ENCODE measurements at regions of chr10 and their contacts with region 1.

Region 1: DNA sequence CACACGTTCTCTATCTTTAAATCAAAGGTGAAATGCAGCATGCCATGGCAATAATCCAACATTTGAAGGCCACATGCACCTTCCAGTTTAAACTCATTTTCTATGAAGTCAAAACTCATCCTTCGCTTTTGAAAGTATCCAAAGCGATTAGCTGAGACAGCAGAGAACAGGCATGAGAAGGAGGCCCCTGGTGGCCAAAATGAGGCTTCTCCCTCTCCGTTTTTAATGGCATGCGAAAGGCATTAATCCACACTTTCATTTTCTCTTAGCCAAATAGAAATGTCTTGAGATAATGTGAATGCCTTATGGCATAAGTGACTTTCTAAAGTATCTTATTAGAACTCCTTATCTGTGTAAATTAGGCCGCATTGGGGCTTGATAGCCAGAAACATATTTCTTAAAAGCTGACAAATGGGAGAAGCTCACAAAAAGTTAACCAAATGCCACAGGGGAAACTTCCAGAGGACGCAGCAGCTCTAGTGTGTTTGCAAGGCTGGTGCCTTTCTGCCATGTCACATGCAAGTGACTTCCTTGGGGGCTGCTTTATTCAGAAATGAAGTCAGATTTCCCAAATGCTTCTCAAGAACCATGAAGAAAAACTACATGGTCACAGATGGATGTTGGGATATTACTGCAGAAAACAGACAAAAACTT is 1189.6 kb downstream of the SORCS1 start:
- DNase-seq: no peak
- ATAC-seq: peak; percentile 91
- H3K4me3 ChIP-seq: no peak overlapping the region
- H3K27ac ChIP-seq: no peak overlapping the region
- H3K4me1 ChIP-seq: no peaks in the 10 kb centered on the region
- H3K27me3 ChIP-seq: no peaks in the 10 kb centered on the region
- CTCF ChIP-seq: peak; percentile 45 to 55 (median 47); a peak in 5 of 6 replicates
- EP300 ChIP-seq: no peak
- POLR2A ChIP-seq: no peak
- RAD21 ChIP-seq: peak; percentile 26; the same call in 1 of the 2 replicates

Region 2: DNA sequence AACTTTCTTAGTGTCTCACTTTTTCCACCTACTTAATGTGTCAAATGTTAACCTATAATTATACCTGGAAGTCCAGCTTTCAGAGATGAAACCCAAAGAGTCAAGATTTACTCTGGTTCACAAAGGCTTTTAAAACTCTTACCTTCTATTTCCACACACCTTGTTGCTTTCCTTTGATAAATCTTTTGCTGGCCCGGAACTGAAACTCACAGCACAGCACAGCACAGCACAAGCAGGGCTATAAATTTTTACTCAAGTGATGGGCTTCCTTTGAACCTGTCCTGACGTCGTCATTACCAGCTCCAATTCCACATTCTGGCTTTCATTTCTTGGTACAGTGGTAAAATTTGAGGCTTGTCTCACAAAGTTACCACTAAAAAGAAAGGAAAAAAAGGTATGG is 472.9 kb before region 1 on chr10:
- CTCF ChIA-PET with region 1: no interaction called
- POLR2A ChIA-PET with region 1: no interaction called
- RAD21 ChIA-PET with region 1: no interaction called
- SMC1A ChIA-PET with region 1: no interaction called
- in situ Hi-C with region 1: no loop called
- intact Hi-C with region 1: no loop called
- DNase-seq: no peak
- ATAC-seq: no peak
- H3K4me3 ChIP-seq: no peak overlapping the region
- H3K27ac ChIP-seq: no peak overlapping the region
- H3K4me1 ChIP-seq: no peaks in the 10 kb centered on the region
- H3K27me3 ChIP-seq: no peaks in the 10 kb centered on the region
- CTCF ChIP-seq: no peak
- EP300 ChIP-seq: no peak
- POLR2A ChIP-seq: no peak
- RAD21 ChIP-seq: no peak

Region 3: GRCh38 chr10:105963334-105963884 is 11.5 kb before region 1 on chr10:
- CTCF ChIA-PET with region 1: interaction called, 10 read pairs
- POLR2A ChIA-PET with region 1: no interaction called
- RAD21 ChIA-PET with region 1: interaction called, 8 read pairs
- SMC1A ChIA-PET with region 1: interaction called, 7 read pairs
- in situ Hi-C with region 1: no loop called
- intact Hi-C with region 1: no loop called
- DNase-seq: no peak
- ATAC-seq: no peak
- H3K4me3 ChIP-seq: no peak overlapping the region
- H3K27ac ChIP-seq: no peak overlapping the region
- H3K4me1 ChIP-seq: no peaks in the 10 kb centered on the region
- H3K27me3 ChIP-seq: no peaks in the 10 kb centered on the region
- CTCF ChIP-seq: no peak
- EP300 ChIP-seq: no peak
- POLR2A ChIP-seq: no peak
- RAD21 ChIP-seq: no peak

Region 4: GRCh38 chr10:105986912-105987635 is 12.1 kb after region 1 on chr10:
- CTCF ChIA-PET with region 1: interaction called, 10 read pairs
- POLR2A ChIA-PET with region 1: no interaction called
- RAD21 ChIA-PET with region 1: no interaction called
- SMC1A ChIA-PET with region 1: interaction called, 6 read pairs
- in situ Hi-C with region 1: no loop called
- intact Hi-C with region 1: no loop called
- DNase-seq: no peak
- ATAC-seq: no peak
- H3K4me3 ChIP-seq: no peak overlapping the region
- H3K27ac ChIP-seq: no peak overlapping the region
- H3K4me1 ChIP-seq: no peaks in the 10 kb centered on the region
- H3K27me3 ChIP-seq: no peaks in the 10 kb centered on the region
- CTCF ChIP-seq: no peak
- EP300 ChIP-seq: no peak
- POLR2A ChIP-seq: no peak
- RAD21 ChIP-seq: no peak